HepG2 (cell line): ENCODE measurements at regions of chr2 and their contacts with region 1.

Region 1: DNA sequence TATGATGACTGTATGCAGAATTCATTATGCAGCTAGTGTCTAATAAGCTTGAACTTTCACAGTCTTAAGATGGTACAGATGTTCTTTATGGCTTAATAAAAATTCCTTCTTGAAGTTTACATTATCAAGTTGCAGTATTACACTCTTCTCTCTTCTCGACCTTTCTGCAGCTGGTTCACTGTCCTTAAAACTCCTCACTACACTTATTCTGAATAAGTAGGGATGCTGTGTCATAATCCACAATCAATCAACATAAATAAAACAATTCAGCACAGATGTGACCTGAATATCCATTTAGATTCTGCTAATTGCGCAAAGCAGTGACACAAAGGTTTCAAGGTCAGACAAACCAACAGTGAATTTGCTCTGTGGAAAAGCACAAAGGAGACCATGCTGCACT is 356.8 kb downstream of the SUCLG1 start:
- DNase-seq: no peak
- ATAC-seq: no peak
- H3K4me3 ChIP-seq: no peak overlapping the region
- H3K27ac ChIP-seq: no peak overlapping the region
- H3K4me1 ChIP-seq: peaks cover 4% of the 10 kb centered on the region; the same call in 1 of the 2 replicates
- H3K27me3 ChIP-seq: no peaks in the 10 kb centered on the region; a peak in 1 of 5 replicates
- CTCF ChIP-seq: no peak
- EP300 ChIP-seq: no peak
- POLR2A ChIP-seq: no peak
- RAD21 ChIP-seq: no peak

Region 2: DNA sequence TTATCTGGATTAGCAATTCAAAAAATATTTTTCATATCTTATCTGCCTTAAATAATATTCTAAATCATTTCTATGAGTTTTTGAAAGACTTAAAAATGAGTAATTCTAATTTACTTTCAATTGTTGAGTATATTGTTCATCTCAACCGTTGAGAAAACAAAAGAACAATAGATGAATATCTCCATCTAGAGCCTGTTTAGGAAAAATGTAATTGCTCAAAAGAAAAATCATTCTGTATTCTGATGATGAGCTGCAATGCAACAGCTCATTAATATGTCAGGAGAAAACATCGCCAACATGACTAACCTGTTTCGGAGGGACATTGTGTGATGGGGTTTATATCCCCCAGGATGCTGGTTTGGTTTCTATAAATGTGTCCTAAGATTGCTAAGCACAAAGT is 60.8 kb before region 1 on chr2:
- CTCF ChIA-PET with region 1: no interaction called
- POLR2A ChIA-PET with region 1: no interaction called
- in situ Hi-C with region 1: no loop called
- intact Hi-C with region 1: loop called (anchors 5 kb)
- DNase-seq: no peak
- ATAC-seq: no peak
- H3K4me3 ChIP-seq: no peak overlapping the region
- H3K27ac ChIP-seq: no peak overlapping the region
- H3K4me1 ChIP-seq: no peaks in the 10 kb centered on the region
- H3K27me3 ChIP-seq: peaks cover 0 to 11% of the 10 kb centered on the region in 2 experiments; a peak in 2 of 5 replicates
- CTCF ChIP-seq: no peak
- EP300 ChIP-seq: no peak
- POLR2A ChIP-seq: no peak
- RAD21 ChIP-seq: no peak

Region 3: DNA sequence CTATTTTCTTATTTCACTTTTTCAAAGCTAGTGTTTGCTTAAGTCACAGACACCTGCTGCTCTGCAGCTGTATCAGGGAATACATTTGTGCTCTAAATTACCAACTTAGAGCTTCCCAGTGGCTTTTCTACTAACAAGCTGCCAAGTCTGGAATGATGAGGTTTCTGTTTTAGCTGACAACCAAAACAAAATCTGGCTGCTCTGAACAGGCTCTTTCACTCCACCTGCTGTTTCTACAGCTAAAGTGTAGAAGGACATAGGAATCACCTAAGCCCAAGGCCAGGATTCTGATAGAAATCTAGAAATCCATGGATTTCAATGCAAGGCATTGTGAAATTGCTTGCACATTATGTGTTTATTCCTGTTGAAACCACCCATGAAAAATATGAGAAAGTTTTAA is 155.6 kb after region 1 on chr2:
- CTCF ChIA-PET with region 1: no interaction called
- POLR2A ChIA-PET with region 1: no interaction called
- in situ Hi-C with region 1: no loop called
- intact Hi-C with region 1: loop called (anchors 10 kb)
- DNase-seq: peak; percentile 42
- ATAC-seq: peak; percentile 99
- H3K4me3 ChIP-seq: no peak overlapping the region
- H3K27ac ChIP-seq: no peak overlapping the region
- H3K4me1 ChIP-seq: peaks cover 18% of the 10 kb centered on the region
- H3K27me3 ChIP-seq: no peaks in the 10 kb centered on the region
- CTCF ChIP-seq: peak; percentile 75
- EP300 ChIP-seq: no peak
- POLR2A ChIP-seq: no peak
- RAD21 ChIP-seq: peak; percentile 62; the same call in 1 of the 2 replicates